Activated naive CD4-positive, alpha-beta T cell treated with anti-CD3 and anti-CD28 coated beads for 36 hours (primary cell): ENCODE measurements at regions of chr10 and their contacts with region 1.

Region 1: DNA sequence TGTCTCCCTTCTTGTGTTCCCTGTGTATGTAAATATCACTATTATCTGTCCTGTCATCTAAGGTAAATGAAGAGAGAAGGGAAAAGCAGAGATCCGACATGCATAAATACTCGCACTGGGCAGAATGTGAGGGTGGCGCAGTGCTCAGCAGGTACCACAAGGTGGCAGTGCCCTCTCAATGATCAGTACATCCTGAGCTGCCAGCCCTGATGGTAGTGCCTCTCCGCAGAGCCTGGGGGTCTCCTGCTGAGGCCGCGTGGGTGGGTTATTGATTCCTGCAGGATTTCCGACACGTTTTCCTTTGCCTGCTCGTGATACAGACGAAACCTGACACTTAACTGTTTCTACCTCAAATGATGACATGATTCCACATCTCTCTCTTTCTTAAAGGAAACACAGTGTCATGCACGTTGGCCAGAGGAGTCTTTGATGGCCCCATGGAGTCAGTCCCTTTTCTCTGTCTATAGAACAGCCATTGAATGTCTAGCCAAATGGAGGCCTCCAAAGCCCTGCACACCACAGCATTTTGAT is 19.8 kb downstream of the RGR start:
- DNase-seq: peak; percentile 86
- H3K4me3 Mint-ChIP-seq: no peak overlapping the region
- H3K27ac Mint-ChIP-seq: no peak overlapping the region
- H3K4me1 Mint-ChIP-seq: peaks cover 29% of the 10 kb centered on the region
- H3K27me3 Mint-ChIP-seq: peaks cover 25% of the 10 kb centered on the region

Region 2: GRCh38 chr10:83943049-83943448 is 321.6 kb before region 1 on chr10:
- CTCF ChIA-PET with region 1: no interaction called
- intact Hi-C with region 1: no loop called
- DNase-seq: no peak
- H3K4me3 Mint-ChIP-seq: no peak overlapping the region
- H3K27ac Mint-ChIP-seq: no peak overlapping the region
- H3K4me1 Mint-ChIP-seq: no peaks in the 10 kb centered on the region
- H3K27me3 Mint-ChIP-seq: peaks cover 6% of the 10 kb centered on the region

Region 3: GRCh38 chr10:84139126-84140035 is 125.3 kb before region 1 on chr10 and contains the start of gene GHITM:
- CTCF ChIA-PET with region 1: no interaction called
- intact Hi-C with region 1: loop called (anchors 2 kb)
- DNase-seq: peak; percentile 100
- H3K4me3 Mint-ChIP-seq: peak within 1 kb of the TSS; percentile 95
- H3K27ac Mint-ChIP-seq: peak within 1 kb of the TSS; percentile 99
- H3K4me1 Mint-ChIP-seq: peaks cover 36% of the 10 kb centered on the region
- H3K27me3 Mint-ChIP-seq: no peaks in the 10 kb centered on the region
- total RNA-seq, gene GHITM: 281 TPM

Region 4: DNA sequence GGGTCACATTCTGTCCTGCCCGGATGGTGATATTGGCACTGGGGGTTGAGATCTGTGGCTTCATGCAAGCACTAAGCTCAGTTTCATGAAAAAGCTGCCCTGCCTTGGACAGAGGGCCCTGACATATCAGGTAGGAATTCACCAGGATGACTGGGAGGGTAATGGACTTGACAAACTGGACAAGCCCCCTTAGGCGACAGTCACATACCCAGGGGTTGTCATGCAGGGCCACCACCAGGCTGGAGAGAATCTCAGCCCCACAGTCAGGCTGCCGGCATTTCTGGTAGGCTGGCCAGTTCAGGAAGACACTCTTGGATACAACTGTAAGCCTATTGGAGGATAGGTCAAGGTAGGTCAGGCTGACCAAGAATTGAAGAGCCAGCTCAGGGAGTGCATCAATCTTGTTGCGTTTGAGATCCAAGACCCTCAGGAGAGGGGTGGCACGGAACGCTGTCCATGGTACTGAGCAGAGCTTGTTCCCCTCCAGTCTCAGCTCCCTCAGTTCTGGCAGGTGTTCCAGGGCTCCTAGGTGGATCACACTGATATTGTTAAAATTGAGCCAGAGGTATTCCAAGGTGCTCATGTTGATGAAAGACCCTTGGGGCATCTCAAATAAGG is 40.2 kb before region 1 on chr10:
- CTCF ChIA-PET with region 1: no interaction called
- intact Hi-C with region 1: no loop called
- DNase-seq: no peak
- H3K4me3 Mint-ChIP-seq: no peak overlapping the region
- H3K27ac Mint-ChIP-seq: no peak overlapping the region
- H3K4me1 Mint-ChIP-seq: no peaks in the 10 kb centered on the region
- H3K27me3 Mint-ChIP-seq: peaks cover 18% of the 10 kb centered on the region

Region 5: DNA sequence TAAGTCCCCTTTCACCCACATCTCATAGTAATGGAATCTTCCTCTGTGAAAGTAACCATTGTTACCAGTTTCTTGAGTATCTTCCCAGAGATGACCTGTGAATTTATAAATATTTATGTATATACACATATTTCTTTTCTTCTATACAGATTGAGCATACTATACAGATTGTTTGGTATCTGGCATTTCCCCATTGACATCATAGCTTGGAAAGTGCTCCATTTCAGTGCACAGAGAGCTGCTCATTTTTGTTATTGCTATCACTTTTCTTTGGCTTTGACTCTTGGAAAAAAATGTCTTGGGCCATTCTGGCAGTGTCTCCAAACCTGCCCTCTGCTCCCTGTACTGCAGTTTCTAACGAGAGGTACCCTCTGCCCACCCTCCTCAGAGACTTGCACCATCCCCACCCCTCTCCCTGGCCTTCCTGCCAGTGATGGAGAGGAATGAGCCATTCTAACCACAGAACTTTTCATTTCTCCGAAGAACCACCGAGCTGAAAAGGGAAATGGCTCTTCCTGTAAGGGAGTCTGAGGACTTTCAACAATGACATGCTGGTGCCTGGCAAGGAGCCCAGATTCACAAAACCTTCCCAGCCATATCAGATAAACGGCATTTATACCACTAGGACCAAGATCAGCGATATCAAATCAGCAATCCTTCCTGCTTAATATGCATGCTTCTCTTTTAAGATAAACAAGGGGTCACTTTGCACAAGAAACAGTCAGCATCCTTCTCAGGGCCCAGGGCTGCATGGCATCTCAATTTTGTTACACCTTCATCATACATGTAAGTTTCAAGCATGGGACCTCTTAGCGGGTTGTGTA is 44.0 kb after region 1 on chr10:
- CTCF ChIA-PET with region 1: interaction called, 17 read pairs
- intact Hi-C with region 1: loop called (anchors 1 kb)
- DNase-seq: peak; percentile 85
- H3K4me3 Mint-ChIP-seq: peak overlapping the region; percentile 42
- H3K27ac Mint-ChIP-seq: peak overlapping the region; percentile 93
- H3K4me1 Mint-ChIP-seq: peaks cover 45% of the 10 kb centered on the region
- H3K27me3 Mint-ChIP-seq: peaks cover 1% of the 10 kb centered on the region

Region 6: GRCh38 chr10:84341538-84341856 is 76.8 kb after region 1 on chr10:
- CTCF ChIA-PET with region 1: interaction called, 17 read pairs
- intact Hi-C with region 1: loop called (anchors 1 kb)
- DNase-seq: peak; percentile 67
- H3K4me3 Mint-ChIP-seq: peak overlapping the region; percentile 59
- H3K27ac Mint-ChIP-seq: peak overlapping the region; percentile 77
- H3K4me1 Mint-ChIP-seq: peaks cover 51% of the 10 kb centered on the region
- H3K27me3 Mint-ChIP-seq: no peaks in the 10 kb centered on the region

Region 7: DNA sequence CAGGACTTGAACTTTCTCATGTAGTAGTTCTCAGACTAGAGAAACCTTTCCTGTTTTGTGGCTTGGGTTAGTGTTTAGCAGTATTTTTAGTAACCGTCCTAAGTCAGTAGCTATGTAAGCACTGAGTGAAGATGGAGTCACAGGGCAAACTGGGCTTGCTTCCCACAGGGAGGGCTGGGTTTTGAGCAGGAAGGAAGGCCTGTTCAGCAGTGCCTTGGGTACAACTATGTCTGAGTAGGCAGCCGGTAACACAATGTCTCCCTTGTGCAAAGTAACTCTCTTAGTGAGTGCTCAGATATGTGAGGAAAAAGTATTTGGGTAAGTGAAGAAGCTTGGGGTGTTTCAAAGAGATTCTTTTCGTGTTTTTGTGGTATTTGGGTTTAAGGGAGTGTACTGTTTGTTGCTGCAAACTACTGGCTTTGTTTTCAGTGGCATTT is 160.1 kb after region 1 on chr10:
- CTCF ChIA-PET with region 1: interaction called, 8 read pairs
- intact Hi-C with region 1: loop called (anchors 2 kb)
- DNase-seq: peak; percentile 52
- H3K4me3 Mint-ChIP-seq: peak overlapping the region; percentile 7
- H3K27ac Mint-ChIP-seq: peak overlapping the region; percentile 68
- H3K4me1 Mint-ChIP-seq: peaks cover 43% of the 10 kb centered on the region
- H3K27me3 Mint-ChIP-seq: no peaks in the 10 kb centered on the region

Region 8: GRCh38 chr10:84665883-84666463 is 401.3 kb after region 1 on chr10:
- CTCF ChIA-PET with region 1: no interaction called
- intact Hi-C with region 1: no loop called
- DNase-seq: peak; percentile 35
- H3K4me3 Mint-ChIP-seq: no peak overlapping the region
- H3K27ac Mint-ChIP-seq: no peak overlapping the region
- H3K4me1 Mint-ChIP-seq: no peaks in the 10 kb centered on the region
- H3K27me3 Mint-ChIP-seq: no peaks in the 10 kb centered on the region

Region 9: DNA sequence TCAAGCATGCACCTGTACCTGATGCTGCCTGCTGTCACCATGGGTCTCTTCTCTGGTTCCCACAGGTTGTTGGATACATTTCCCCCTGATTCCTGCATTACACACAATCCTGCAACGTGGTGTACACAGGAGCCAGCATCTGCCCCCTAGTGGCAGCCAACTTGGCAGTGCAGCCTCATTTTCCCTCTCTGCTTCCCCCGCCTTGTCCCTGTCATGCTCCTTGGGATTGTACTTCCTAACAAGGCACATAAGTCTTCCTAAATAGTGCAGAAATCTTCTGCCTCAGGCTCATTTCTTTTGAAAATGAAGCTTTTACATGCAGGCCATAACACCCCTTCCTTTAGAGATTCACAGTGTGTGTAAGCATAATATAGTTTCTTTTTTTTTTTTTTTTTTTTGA is 451.2 kb after region 1 on chr10:
- CTCF ChIA-PET with region 1: no interaction called
- intact Hi-C with region 1: loop called (anchors 1 kb)
- DNase-seq: peak; percentile 18
- H3K4me3 Mint-ChIP-seq: no peak overlapping the region
- H3K27ac Mint-ChIP-seq: no peak overlapping the region
- H3K4me1 Mint-ChIP-seq: no peaks in the 10 kb centered on the region
- H3K27me3 Mint-ChIP-seq: peaks cover 5% of the 10 kb centered on the region